ENCODE measurements at regions of chr19 and their contacts with region 1.

Region 1: DNA sequence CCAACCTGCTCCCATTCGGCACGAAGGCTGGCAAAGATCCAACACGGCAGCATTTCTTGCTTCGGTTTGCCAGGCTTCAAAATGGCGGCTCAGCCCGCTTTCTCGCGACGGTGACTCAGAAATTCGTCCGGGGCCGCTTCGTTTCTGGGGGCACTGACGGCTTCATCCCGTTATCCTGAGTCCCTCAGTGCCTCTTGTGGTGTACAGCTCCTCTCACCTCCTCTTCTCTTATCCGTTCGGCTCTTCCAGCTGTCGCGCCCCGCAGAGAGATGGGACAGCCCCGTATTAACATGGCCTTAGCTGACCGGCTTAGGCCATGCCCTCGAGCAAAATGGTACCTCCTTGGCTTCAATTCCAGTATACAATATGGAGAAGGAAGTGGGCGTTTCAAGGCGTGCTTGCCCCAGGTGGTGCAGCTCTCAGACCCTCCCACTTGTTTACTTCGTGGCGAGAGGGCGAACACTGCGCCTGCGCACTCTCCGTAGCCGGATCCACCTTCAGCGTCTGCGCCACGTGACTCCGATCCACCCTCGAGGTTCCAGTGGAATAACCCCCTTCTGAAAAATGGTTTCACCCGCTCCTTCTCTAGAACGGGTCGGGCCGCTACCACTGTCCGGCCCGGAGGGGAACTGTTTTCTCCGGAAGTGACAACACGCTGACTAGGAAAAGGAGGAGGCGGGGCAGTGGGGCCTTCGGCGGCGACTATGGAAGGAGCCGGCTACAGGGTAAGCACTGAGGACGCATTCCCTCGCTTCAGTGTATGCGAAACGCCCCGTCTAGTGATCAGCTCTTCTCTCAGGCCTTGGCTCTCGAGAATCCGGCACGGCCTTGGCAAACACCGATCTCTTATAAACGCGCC is at the starts of genes AKT1S1 and TBC1D17:
- DNase-seq: peak; percentile 99
- H3K4me3 Mint-ChIP-seq: no peak within 1 kb of the TSS
- H3K27ac Mint-ChIP-seq: no peak within 1 kb of the TSS
- H3K4me1 Mint-ChIP-seq: peaks cover 30% of the 10 kb centered on the region
- H3K27me3 Mint-ChIP-seq: no peaks in the 10 kb centered on the region
- total RNA-seq, gene AKT1S1: 32.1 and 32.2 TPM in 2 replicates
- total RNA-seq, gene TBC1D17: 38.7 and 41.8 TPM in 2 replicates

Region 2: GRCh38 chr19:49497047-49497788 is 380.0 kb before region 1 on chr19:
- intact Hi-C with region 1: loop called (anchors 1 kb)
- DNase-seq: peak; percentile 65
- H3K4me3 Mint-ChIP-seq: peak overlapping the region; percentile 91
- H3K27ac Mint-ChIP-seq: peak overlapping the region; percentile 94
- H3K4me1 Mint-ChIP-seq: peaks cover 64% of the 10 kb centered on the region
- H3K27me3 Mint-ChIP-seq: no peaks in the 10 kb centered on the region

Region 3: GRCh38 chr19:49817964-49818648 is 59.1 kb before region 1 on chr19 and contains the start of gene MED25:
- intact Hi-C with region 1: loop called (anchors 1 kb)
- DNase-seq: peak; percentile 88
- H3K4me3 Mint-ChIP-seq: peak within 1 kb of the TSS; percentile 94
- H3K27ac Mint-ChIP-seq: peak within 1 kb of the TSS; percentile 93
- H3K4me1 Mint-ChIP-seq: peaks cover 25% of the 10 kb centered on the region
- H3K27me3 Mint-ChIP-seq: no peaks in the 10 kb centered on the region
- total RNA-seq, gene MED25: 54.2 and 54.5 TPM in 2 replicates

Region 4: GRCh38 chr19:49896863-49897621 is 19.8 kb after region 1 on chr19 and contains the start of gene IL4I1:
- intact Hi-C with region 1: loop called (anchors 1 kb)
- DNase-seq: peak; percentile 54
- H3K4me3 Mint-ChIP-seq: peak within 1 kb of the TSS; percentile 83
- H3K27ac Mint-ChIP-seq: peak within 1 kb of the TSS; percentile 99
- H3K4me1 Mint-ChIP-seq: peaks cover 41% of the 10 kb centered on the region
- H3K27me3 Mint-ChIP-seq: peaks cover 1% of the 10 kb centered on the region
- total RNA-seq, gene IL4I1: 50.0 and 51.5 TPM in 2 replicates

Region 5: DNA sequence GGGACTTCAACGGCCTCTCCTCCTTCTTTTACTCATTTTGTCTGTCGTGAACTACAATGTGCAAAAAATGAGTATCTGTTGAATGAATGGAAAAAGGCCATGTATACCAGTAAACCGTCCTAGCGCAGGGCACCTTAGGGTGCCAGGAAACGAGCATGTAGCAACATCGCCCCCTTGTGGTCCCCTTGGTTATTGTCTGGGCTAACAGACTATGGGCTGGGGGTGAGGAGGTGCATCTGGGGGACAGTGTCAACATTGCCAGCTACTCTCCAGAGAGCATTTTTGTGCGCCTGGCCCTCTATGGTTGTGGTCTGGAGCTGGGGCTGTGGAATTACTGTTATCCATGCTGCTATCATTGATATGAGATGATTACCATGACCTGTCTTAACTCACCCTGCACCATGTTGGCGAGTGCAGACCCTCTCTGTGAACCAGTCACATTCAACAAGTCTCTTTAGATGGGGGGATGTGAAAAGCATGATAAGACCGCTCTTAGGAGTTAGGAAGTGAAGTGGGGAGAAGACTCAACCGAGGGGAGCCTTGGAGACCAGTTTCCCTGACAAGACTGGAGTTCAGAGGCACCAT is 106.5 kb after region 1 on chr19:
- intact Hi-C with region 1: loop called (anchors 5 kb)
- DNase-seq: peak; percentile 61
- H3K4me3 Mint-ChIP-seq: no peak overlapping the region
- H3K27ac Mint-ChIP-seq: no peak overlapping the region
- H3K4me1 Mint-ChIP-seq: peaks cover 13% of the 10 kb centered on the region
- H3K27me3 Mint-ChIP-seq: no peaks in the 10 kb centered on the region

Region 6: GRCh38 chr19:50341091-50341564 is 463.9 kb after region 1 on chr19:
- intact Hi-C with region 1: no loop called
- DNase-seq: no peak
- H3K4me3 Mint-ChIP-seq: no peak overlapping the region
- H3K27ac Mint-ChIP-seq: peak overlapping the region; percentile 48
- H3K4me1 Mint-ChIP-seq: peaks cover 29% of the 10 kb centered on the region
- H3K27me3 Mint-ChIP-seq: no peaks in the 10 kb centered on the region